Naive thymus-derived CD4-positive, alpha-beta T cell (primary cell): ENCODE measurements at regions of chr16 and their contacts with region 1.

Region 1: GRCh38 chr16:11255737-11256660 is at the start of gene SOCS1:
- DNase-seq: peak; percentile 76 to 97 (median 87)
- ATAC-seq: peak; percentile 82
- H3K4me3 ChIP-seq: peak within 1 kb of the TSS; percentile 85
- H3K4me3 Mint-ChIP-seq: peak within 1 kb of the TSS; percentile 91 to 98 (median 94)
- H3K27ac ChIP-seq: peak within 1 kb of the TSS; percentile 97
- H3K27ac Mint-ChIP-seq: peak within 1 kb of the TSS; percentile 88 to 97 (median 96)
- H3K4me1 ChIP-seq: peaks cover 48 to 52% of the 10 kb centered on the region in 2 donors
- H3K4me1 Mint-ChIP-seq: peaks cover 19 to 64% (median 59%) of the 10 kb centered on the region in 7 donors
- H3K27me3 ChIP-seq: no peaks in the 10 kb centered on the region
- H3K27me3 Mint-ChIP-seq: peaks cover 0 to 4% (median 0%) of the 10 kb centered on the region in 5 donors
- total RNA-seq, gene SOCS1: 12.8 to 191 (median 46.8) TPM

Region 2: GRCh38 chr16:10743610-10744393 is 512.2 kb before region 1 on chr16 and contains the start of gene NUBP1:
- CTCF ChIA-PET with region 1: no interaction called
- POLR2A ChIA-PET with region 1: no interaction called
- intact Hi-C with region 1: loop called in 1 of 2 experiments (anchors 10 kb)
- DNase-seq: peak; percentile 97 to 99 (median 99)
- ATAC-seq: peak; percentile 98
- H3K4me3 ChIP-seq: peak within 1 kb of the TSS; percentile 74
- H3K4me3 Mint-ChIP-seq: peak within 1 kb of the TSS; percentile 84 to 99 (median 95)
- H3K27ac ChIP-seq: peak within 1 kb of the TSS; percentile 92
- H3K27ac Mint-ChIP-seq: peak within 1 kb of the TSS; percentile 98 to 100 (median 99)
- H3K4me1 ChIP-seq: peaks cover 7 to 10% of the 10 kb centered on the region in 2 donors
- H3K4me1 Mint-ChIP-seq: peaks cover 15 to 48% (median 27%) of the 10 kb centered on the region in 7 donors
- H3K27me3 ChIP-seq: no peaks in the 10 kb centered on the region
- H3K27me3 Mint-ChIP-seq: peaks cover 0 to 2% (median 0%) of the 10 kb centered on the region in 5 donors
- total RNA-seq, gene NUBP1: 24.0 to 30.0 (median 25.5) TPM

Region 3: DNA sequence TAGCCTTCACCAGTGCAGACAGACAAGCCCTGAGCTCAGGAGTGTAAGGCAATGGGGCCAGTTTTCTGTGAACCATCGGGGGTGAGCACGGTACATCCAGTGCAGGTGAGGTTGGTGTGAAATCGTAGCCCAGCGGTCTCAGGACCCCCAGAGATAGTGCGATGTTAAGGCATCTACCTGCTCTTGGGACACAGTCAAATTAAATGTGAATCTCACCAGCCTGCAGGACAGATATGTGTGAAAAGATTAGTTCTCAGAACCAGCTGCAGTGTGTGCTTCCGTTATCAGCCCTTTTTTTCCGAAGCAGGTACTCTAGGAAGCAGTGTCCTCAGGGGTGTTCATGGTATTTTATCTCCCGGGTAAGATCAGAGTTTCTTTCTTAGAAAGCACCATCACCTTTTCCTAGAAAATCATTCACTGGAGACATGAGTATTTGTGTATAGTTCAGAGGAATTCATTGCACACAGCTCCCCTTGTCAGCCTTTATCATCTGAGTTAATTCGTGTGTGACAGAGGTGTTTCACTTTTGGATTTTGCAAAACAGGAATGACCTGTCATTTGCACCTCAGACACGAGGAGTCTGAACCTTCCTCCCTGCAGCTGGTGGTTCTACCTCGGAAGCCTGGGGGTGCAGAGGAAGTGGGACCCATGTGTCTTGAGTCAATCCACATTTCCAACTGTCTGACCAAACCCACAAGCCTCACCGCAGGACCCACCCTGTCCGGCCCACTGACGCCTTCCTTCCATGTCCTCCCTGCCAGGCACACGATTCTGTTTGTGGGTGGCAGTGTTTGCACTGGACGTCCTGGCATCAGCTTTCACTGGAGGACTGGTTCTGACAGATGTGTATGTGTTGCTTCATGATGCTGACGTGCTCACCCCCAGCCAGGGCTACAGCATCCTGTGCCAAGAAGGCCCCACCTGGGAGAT is 203.9 kb before region 1 on chr16:
- CTCF ChIA-PET with region 1: no interaction called
- POLR2A ChIA-PET with region 1: interaction called, 4 read pairs
- intact Hi-C with region 1: loop called (anchors 1 to 10 kb)
- DNase-seq: peak in 2 of 9 donors; percentile 11 to 81
- ATAC-seq: peak; percentile 74
- H3K4me3 ChIP-seq: no peak overlapping the region
- H3K4me3 Mint-ChIP-seq: peak overlapping the region in 8 of 10 donors; percentile 9 to 74 (median 48)
- H3K27ac ChIP-seq: peak overlapping the region; percentile 24
- H3K27ac Mint-ChIP-seq: peak overlapping the region; percentile 20 to 86 (median 60)
- H3K4me1 ChIP-seq: peaks cover 18 to 26% of the 10 kb centered on the region in 2 donors
- H3K4me1 Mint-ChIP-seq: peaks cover 28 to 87% (median 48%) of the 10 kb centered on the region in 7 donors
- H3K27me3 ChIP-seq: no peaks in the 10 kb centered on the region
- H3K27me3 Mint-ChIP-seq: no peaks in the 10 kb centered on the region

Region 4: GRCh38 chr16:11268921-11269375 is 12.9 kb after region 1 on chr16 and contains the start of gene TNP2:
- CTCF ChIA-PET with region 1: interaction called, 5 read pairs
- POLR2A ChIA-PET with region 1: interaction called, 22 read pairs
- intact Hi-C with region 1: no loop called
- DNase-seq: no peak
- ATAC-seq: no peak
- H3K4me3 ChIP-seq: no peak within 1 kb of the TSS
- H3K4me3 Mint-ChIP-seq: no peak within 1 kb of the TSS
- H3K27ac ChIP-seq: no peak within 1 kb of the TSS
- H3K27ac Mint-ChIP-seq: peak within 1 kb of the TSS in 2 of 9 donors; percentile 9 to 17
- H3K4me1 ChIP-seq: peaks cover 4 to 12% of the 10 kb centered on the region in 2 donors
- H3K4me1 Mint-ChIP-seq: peaks cover 4 to 11% (median 8%) of the 10 kb centered on the region in 7 donors
- H3K27me3 ChIP-seq: no peaks in the 10 kb centered on the region
- H3K27me3 Mint-ChIP-seq: peaks cover 0 to 13% (median 0%) of the 10 kb centered on the region in 5 donors
- total RNA-seq, gene TNP2: not detected

Region 5: GRCh38 chr16:11356573-11357331 is 100.8 kb after region 1 on chr16:
- CTCF ChIA-PET with region 1: interaction called, 11 read pairs
- POLR2A ChIA-PET with region 1: interaction called, 55 read pairs
- intact Hi-C with region 1: loop called (anchors 1 kb)
- DNase-seq: peak in 8 of 9 donors; percentile 17 to 55 (median 36)
- ATAC-seq: peak; percentile 47
- H3K4me3 ChIP-seq: no peak overlapping the region
- H3K4me3 Mint-ChIP-seq: peak overlapping the region in 5 of 10 donors; percentile 9 to 86 (median 31)
- H3K27ac ChIP-seq: no peak overlapping the region
- H3K27ac Mint-ChIP-seq: peak overlapping the region in 8 of 9 donors; percentile 22 to 99 (median 45)
- H3K4me1 ChIP-seq: peaks cover 33 to 51% of the 10 kb centered on the region in 2 donors
- H3K4me1 Mint-ChIP-seq: peaks cover 37 to 80% (median 68%) of the 10 kb centered on the region in 7 donors
- H3K27me3 ChIP-seq: no peaks in the 10 kb centered on the region
- H3K27me3 Mint-ChIP-seq: peaks cover 0 to 25% (median 4%) of the 10 kb centered on the region in 5 donors

Region 6: DNA sequence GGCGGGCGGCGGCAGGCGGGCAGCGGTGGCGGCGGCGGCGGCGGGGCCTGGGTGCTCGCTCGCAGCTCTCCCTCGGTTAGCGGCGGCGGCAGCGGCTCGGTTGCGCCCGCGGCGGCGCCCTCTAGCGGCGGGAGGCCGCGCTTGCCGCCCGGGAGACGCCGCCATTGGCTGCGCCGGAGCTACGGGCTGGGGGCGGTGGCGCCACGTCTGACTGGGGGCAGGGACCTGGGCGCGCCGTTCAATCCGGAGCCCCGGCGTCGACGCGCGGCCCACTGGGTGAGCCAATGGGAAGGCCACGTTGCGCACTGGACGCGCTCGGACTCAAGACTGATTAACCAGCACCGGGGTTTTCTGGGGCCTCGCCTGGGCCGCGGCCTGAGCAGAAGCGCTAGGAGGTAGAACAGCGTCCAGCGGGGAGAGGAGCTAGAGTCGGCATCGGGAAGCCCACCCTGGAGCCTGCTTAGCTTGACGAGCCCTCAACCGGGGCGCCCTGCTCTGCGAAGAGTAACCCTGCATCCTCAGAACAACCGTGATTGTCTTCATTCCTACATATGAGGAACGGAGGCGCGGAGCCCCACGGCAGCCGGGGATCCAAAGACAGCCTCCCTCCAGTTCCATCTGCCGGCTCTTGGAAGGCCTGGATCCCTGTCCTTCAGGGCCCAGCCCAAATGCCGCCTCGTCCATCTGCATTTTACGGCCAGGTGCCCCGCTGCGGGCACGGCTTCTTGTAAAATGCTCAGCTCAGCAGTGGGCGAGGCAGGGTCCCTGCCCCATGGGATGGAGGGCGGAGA is 541.4 kb after region 1 on chr16 and contains the start of gene ZC3H7A:
- CTCF ChIA-PET with region 1: no interaction called
- POLR2A ChIA-PET with region 1: interaction called, 3 read pairs
- intact Hi-C with region 1: loop called (anchors 2 to 5 kb)
- DNase-seq: peak; percentile 91 to 97 (median 95)
- ATAC-seq: peak; percentile 95
- H3K4me3 ChIP-seq: peak within 1 kb of the TSS; percentile 82
- H3K4me3 Mint-ChIP-seq: peak within 1 kb of the TSS; percentile 90 to 97 (median 94)
- H3K27ac ChIP-seq: peak within 1 kb of the TSS; percentile 97
- H3K27ac Mint-ChIP-seq: peak within 1 kb of the TSS; percentile 93 to 99 (median 98)
- H3K4me1 ChIP-seq: peaks cover 41 to 63% of the 10 kb centered on the region in 2 donors
- H3K4me1 Mint-ChIP-seq: peaks cover 55 to 84% (median 78%) of the 10 kb centered on the region in 7 donors
- H3K27me3 ChIP-seq: no peaks in the 10 kb centered on the region
- H3K27me3 Mint-ChIP-seq: no peaks in the 10 kb centered on the region
- total RNA-seq, gene ZC3H7A: 86.9 to 102 (median 88.6) TPM